K562 (cell line): ENCODE measurements at regions of chr16 and their contacts with region 1.

Region 1: GRCh38 chr16:57689762-57690558 is 4.6 kb upstream of the DRC7 start:
- DNase-seq: peak; percentile 89 to 98 (median 90)
- ATAC-seq: peak; percentile 87
- H3K4me3 ChIP-seq: peak overlapping the region; percentile 20; the same call in 1 of the 2 replicates
- H3K27ac ChIP-seq: peak overlapping the region; percentile 67
- H3K4me1 ChIP-seq: peaks cover 44 to 54% of the 10 kb centered on the region in 2 experiments
- H3K27me3 ChIP-seq: no peaks in the 10 kb centered on the region
- CTCF ChIP-seq: no peak
- EP300 ChIP-seq: peak; percentile 99
- POLR2A ChIP-seq: no peak
- RAD21 ChIP-seq: peak; percentile 10 to 41; a peak in 2 of 4 replicates

Region 2: GRCh38 chr16:57447186-57447962 is 242.6 kb before region 1 on chr16 and contains the starts of genes CIAPIN1 and COQ9:
- CTCF ChIA-PET with region 1: no interaction called
- POLR2A ChIA-PET with region 1: no interaction called
- in situ Hi-C with region 1: no loop called
- intact Hi-C with region 1: no loop called
- DNase-seq: peak; percentile 93 to 96 (median 94)
- ATAC-seq: peak; percentile 99
- H3K4me3 ChIP-seq: peak within 1 kb of the TSS; percentile 88
- H3K27ac ChIP-seq: peak within 1 kb of the TSS; percentile 93
- H3K4me1 ChIP-seq: peaks cover 11 to 15% of the 10 kb centered on the region in 2 experiments; a peak in 3 of 5 replicates
- H3K27me3 ChIP-seq: no peaks in the 10 kb centered on the region
- CTCF ChIP-seq: peak in 1 of 3 experiments; percentile 38; a peak in 2 of 6 replicates
- EP300 ChIP-seq: 0 out of 2 replicates have a peak, but pooled peaks have one; percentile 5
- POLR2A ChIP-seq: peak; percentile 93
- RAD21 ChIP-seq: no peak
- polyA plus RNA-seq, gene CIAPIN1: 256 to 263 TPM
- polyA plus RNA-seq, gene COQ9: 35.0 to 55.2 TPM

Region 3: GRCh38 chr16:57667526-57668258 is 22.3 kb before region 1 on chr16:
- CTCF ChIA-PET with region 1: no interaction called
- POLR2A ChIA-PET with region 1: interaction called, 4 read pairs
- in situ Hi-C with region 1: no loop called
- intact Hi-C with region 1: loop called (anchors 2 kb)
- DNase-seq: peak; percentile 72 to 78 (median 75)
- ATAC-seq: peak; percentile 95
- H3K4me3 ChIP-seq: no peak overlapping the region
- H3K27ac ChIP-seq: peak overlapping the region; percentile 72
- H3K4me1 ChIP-seq: peaks cover 24 to 38% of the 10 kb centered on the region in 2 experiments
- H3K27me3 ChIP-seq: no peaks in the 10 kb centered on the region
- CTCF ChIP-seq: peak; percentile 48 to 63 (median 51)
- EP300 ChIP-seq: peak; percentile 84
- POLR2A ChIP-seq: no peak
- RAD21 ChIP-seq: 0 out of 4 replicates have a peak, but pooled peaks of 1 of the 2 experiments have one; percentile 18

Region 4: DNA sequence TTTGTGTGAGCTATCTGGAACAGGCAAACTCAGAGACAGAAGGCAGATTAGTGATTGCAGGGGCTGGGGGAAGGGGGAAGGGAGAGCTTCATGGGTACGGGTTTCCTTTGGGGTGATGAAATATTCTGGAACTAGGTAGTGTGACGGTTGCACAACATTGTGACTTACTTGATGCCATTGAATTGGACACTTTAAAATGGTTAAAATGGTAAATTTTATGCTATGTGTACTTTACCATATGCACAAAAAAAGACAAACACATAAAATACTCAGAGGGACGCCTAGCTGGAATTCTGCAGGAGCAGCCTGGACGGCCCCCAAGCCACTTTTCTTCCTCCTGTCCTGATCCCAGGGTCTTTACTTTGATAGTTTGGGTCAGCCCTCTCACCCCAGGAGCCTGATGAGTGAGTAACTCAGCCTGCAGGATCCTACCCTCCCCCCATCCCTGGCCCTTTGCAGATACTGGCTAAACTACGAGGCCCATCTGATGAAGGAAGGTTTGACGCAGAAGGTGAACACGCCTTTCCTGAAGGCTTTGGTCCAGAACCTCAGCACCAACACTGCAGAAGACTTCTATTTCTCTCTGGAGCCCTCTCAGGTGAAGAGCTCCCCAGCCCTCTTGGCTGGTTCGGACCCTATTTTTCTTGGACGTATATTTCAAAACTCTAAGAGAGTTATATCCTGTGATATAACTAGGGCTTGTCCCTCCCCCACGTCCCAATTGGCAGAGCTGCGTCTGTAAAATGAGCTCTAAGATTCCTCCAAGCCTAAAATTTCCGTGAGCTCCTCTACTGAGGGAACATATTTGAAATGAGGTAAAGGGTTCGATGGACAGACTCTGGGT is 14.0 kb before region 1 on chr16:
- CTCF ChIA-PET with region 1: no interaction called
- POLR2A ChIA-PET with region 1: interaction called, 8 read pairs
- in situ Hi-C with region 1: no loop called
- intact Hi-C with region 1: loop called (anchors 1 kb)
- DNase-seq: peak; percentile 61 to 81 (median 68)
- ATAC-seq: peak; percentile 91
- H3K4me3 ChIP-seq: no peak overlapping the region
- H3K27ac ChIP-seq: 0 out of 3 replicates have a peak overlapping the region, but pooled peaks have one; percentile 2
- H3K4me1 ChIP-seq: peaks cover 23 to 31% of the 10 kb centered on the region in 2 experiments
- H3K27me3 ChIP-seq: 0 out of 5 replicates have a peak, but pooled peaks cover 0 to 5% of the 10 kb centered on the region in 2 experiments
- CTCF ChIP-seq: no peak
- EP300 ChIP-seq: peak; percentile 64
- POLR2A ChIP-seq: no peak
- RAD21 ChIP-seq: no peak

Region 5: GRCh38 chr16:57700781-57701551 is 11.0 kb after region 1 on chr16:
- CTCF ChIA-PET with region 1: no interaction called
- POLR2A ChIA-PET with region 1: interaction called, 15 read pairs
- in situ Hi-C with region 1: no loop called
- intact Hi-C with region 1: no loop called
- DNase-seq: peak in 1 of 4 experiments; percentile 69
- ATAC-seq: peak; percentile 68
- H3K4me3 ChIP-seq: no peak overlapping the region
- H3K27ac ChIP-seq: peak overlapping the region; percentile 60
- H3K4me1 ChIP-seq: peaks cover 24 to 30% of the 10 kb centered on the region in 2 experiments
- H3K27me3 ChIP-seq: no peaks in the 10 kb centered on the region
- CTCF ChIP-seq: no peak
- EP300 ChIP-seq: peak; percentile 61; the same call in 1 of the 2 replicates
- POLR2A ChIP-seq: no peak
- RAD21 ChIP-seq: no peak